AG04450 (cell line): ENCODE measurements at regions of chr5 and their contacts with region 1.

Region 1: GRCh38 chr5:68215208-68215897 is at the start of gene PIK3R1:
- DNase-seq: peak; percentile 68
- H3K4me3 ChIP-seq: peak within 1 kb of the TSS; percentile 87
- H3K27ac ChIP-seq: peak within 1 kb of the TSS; percentile 96
- H3K27me3 ChIP-seq: no peaks in the 10 kb centered on the region
- CTCF ChIP-seq: peak; percentile 48
- polyA plus RNA-seq, gene PIK3R1: 7.6 and 8.1 TPM in 2 replicates

Region 2: DNA sequence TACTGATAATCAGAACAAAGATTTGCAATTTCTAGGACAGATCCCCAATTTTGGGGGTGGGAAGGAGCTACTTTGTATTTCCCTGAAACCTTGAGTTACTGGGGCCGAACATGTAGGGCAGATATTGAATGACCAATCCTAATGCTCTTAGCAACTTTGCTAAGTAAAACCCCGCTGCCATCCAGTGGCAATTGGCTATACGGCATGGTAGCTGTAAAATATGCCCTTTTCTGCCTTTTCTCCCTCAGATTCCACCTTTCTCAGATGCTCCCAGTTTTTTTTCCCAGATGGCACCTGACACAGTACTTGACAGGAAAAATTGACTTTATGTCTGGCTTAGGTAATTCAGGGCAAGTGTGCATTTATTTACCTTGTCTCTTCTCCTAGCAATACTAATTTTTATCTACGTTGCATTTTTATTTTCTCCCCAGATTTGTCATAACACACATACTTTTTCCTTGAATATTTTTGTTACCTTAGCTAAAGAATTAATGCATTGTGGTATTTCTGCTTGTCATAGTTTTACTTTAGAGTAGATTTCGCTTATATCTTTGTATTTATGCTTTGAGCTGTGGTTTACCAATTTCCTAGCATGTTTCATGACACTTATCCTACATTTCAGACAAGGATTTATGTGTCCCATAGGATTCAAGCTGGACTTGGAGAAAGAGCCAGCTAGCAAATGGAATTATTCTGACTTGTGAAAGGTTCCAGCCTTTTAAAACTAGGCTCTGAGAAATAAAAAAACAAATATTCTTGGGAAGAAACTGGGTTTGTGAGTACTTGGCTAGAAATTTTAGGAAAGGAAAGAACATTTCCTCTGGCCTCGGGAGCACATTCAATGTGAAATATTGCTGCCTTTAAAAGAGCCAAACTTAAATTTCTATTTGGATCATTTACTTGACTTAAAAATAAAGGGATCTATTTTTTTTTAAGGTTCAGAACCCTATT is 37.6 kb after region 1 on chr5:
- CTCF ChIA-PET with region 1: interaction called, 14 read pairs
- POLR2A ChIA-PET with region 1: interaction called, 9 read pairs
- DNase-seq: peak; percentile 42
- H3K4me3 ChIP-seq: no peak overlapping the region
- H3K27ac ChIP-seq: no peak overlapping the region
- H3K27me3 ChIP-seq: no peaks in the 10 kb centered on the region
- CTCF ChIP-seq: peak; percentile 93